A549 (cell line): ENCODE measurements at regions of chr10 and their contacts with region 1.

Region 1: GRCh38 chr10:104580774-104581675 is 60.1 kb upstream of the SORCS3 start:
- DNase-seq: peak; percentile 63 to 67
- ATAC-seq: peak; percentile 77 to 95
- H3K4me3 ChIP-seq: no peak overlapping the region
- H3K27ac ChIP-seq: no peak overlapping the region
- H3K4me1 ChIP-seq: no peaks in the 10 kb centered on the region
- CTCF ChIP-seq: peak; percentile 79
- EP300 ChIP-seq: no peak
- POLR2A ChIP-seq: no peak
- RAD21 ChIP-seq: peak; percentile 73 to 77

Region 2: GRCh38 chr10:103966671-103967447 is 614.2 kb before region 1 on chr10 and contains the start of gene SLK:
- CTCF ChIA-PET with region 1: no interaction called
- POLR2A ChIA-PET with region 1: no interaction called
- DNase-seq: peak; percentile 75 to 82
- ATAC-seq: peak; percentile 81
- H3K4me3 ChIP-seq: peak within 1 kb of the TSS; percentile 95
- H3K27ac ChIP-seq: peak within 1 kb of the TSS; percentile 97 to 98
- H3K4me1 ChIP-seq: peaks cover 22% of the 10 kb centered on the region
- CTCF ChIP-seq: no peak
- EP300 ChIP-seq: no peak
- POLR2A ChIP-seq: peak; percentile 74
- RAD21 ChIP-seq: no peak
- polyA plus RNA-seq, gene SLK: 26.7 and 29.2 TPM in 2 replicates

Region 3: GRCh38 chr10:104614245-104614831 is 33.3 kb after region 1 on chr10:
- CTCF ChIA-PET with region 1: interaction called, 65 read pairs
- POLR2A ChIA-PET with region 1: no interaction called
- DNase-seq: peak; percentile 28 to 38
- ATAC-seq: peak; percentile 64 to 87; a peak in 5 of 6 replicates
- H3K4me3 ChIP-seq: no peak overlapping the region
- H3K27ac ChIP-seq: no peak overlapping the region
- H3K4me1 ChIP-seq: no peaks in the 10 kb centered on the region
- CTCF ChIP-seq: peak; percentile 45; the same call in 2 of the 3 replicates
- EP300 ChIP-seq: no peak
- POLR2A ChIP-seq: no peak
- RAD21 ChIP-seq: peak; percentile 23 to 53; a peak in 3 of 5 replicates

Region 4: DNA sequence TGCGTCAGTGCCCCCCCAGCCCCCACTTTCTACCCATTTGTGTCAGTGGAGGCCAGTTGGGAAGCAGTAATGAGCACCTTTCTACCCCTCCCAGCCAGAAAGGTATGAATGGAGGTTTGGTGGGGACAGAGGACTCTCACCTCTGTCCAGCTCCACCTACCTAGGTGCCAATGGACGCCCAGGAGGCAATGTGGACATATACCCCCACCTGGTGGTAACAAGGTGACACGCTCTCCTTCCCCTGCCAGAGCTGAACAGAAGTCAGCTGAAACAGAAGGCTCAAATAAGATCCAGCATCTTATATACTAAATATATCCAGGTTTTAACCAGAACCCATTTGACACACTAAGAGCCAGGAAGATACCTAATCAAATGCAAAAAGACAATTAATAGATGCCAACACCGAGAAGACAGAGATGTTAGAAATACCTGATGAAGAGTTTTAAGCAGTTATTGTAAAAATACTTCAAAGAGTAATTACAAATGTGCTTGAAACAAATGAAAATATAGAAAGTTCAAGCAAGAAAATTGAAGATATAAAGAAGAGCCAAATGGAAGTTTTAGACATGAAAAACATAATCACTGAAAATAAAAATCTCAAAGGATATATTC is 41.7 kb after region 1 on chr10:
- CTCF ChIA-PET with region 1: interaction called, 65 read pairs
- POLR2A ChIA-PET with region 1: no interaction called
- DNase-seq: peak; percentile 45 to 46
- ATAC-seq: peak; percentile 85 to 86; a peak in 5 of 6 replicates
- H3K4me3 ChIP-seq: no peak overlapping the region
- H3K27ac ChIP-seq: no peak overlapping the region
- H3K4me1 ChIP-seq: no peaks in the 10 kb centered on the region
- CTCF ChIP-seq: peak; percentile 43
- EP300 ChIP-seq: no peak
- POLR2A ChIP-seq: no peak
- RAD21 ChIP-seq: peak; percentile 66 to 80

Region 5: DNA sequence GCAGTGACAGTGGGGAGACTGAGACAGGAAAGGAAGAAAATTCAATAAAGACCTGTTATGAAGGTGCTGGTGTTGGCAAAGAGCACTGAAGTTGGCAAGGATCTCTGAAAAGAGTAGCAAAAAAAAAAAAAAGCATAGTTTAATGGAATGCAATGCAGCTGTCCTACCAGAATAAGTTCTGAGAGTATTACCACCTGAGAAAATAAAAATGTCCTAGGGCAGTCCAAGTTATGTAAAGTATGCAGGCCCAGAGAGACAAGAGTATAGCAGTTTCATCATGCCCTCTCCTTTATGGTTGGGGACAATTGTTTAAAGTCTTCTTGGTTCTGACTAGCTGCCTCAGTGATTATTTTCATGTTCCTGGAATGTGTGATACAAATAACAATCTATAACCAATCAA is 1152.9 kb after region 1 on chr10:
- CTCF ChIA-PET with region 1: no interaction called
- POLR2A ChIA-PET with region 1: no interaction called
- DNase-seq: no peak
- ATAC-seq: no peak
- H3K4me3 ChIP-seq: no peak overlapping the region
- H3K27ac ChIP-seq: no peak overlapping the region
- H3K4me1 ChIP-seq: no peaks in the 10 kb centered on the region
- CTCF ChIP-seq: no peak
- EP300 ChIP-seq: no peak
- POLR2A ChIP-seq: no peak
- RAD21 ChIP-seq: no peak